Activated B cell treated with CpG ODN at 0.5 μM for 24 hours (primary cell): ENCODE measurements at regions of chr21 and their contacts with region 1.

Region 1: DNA sequence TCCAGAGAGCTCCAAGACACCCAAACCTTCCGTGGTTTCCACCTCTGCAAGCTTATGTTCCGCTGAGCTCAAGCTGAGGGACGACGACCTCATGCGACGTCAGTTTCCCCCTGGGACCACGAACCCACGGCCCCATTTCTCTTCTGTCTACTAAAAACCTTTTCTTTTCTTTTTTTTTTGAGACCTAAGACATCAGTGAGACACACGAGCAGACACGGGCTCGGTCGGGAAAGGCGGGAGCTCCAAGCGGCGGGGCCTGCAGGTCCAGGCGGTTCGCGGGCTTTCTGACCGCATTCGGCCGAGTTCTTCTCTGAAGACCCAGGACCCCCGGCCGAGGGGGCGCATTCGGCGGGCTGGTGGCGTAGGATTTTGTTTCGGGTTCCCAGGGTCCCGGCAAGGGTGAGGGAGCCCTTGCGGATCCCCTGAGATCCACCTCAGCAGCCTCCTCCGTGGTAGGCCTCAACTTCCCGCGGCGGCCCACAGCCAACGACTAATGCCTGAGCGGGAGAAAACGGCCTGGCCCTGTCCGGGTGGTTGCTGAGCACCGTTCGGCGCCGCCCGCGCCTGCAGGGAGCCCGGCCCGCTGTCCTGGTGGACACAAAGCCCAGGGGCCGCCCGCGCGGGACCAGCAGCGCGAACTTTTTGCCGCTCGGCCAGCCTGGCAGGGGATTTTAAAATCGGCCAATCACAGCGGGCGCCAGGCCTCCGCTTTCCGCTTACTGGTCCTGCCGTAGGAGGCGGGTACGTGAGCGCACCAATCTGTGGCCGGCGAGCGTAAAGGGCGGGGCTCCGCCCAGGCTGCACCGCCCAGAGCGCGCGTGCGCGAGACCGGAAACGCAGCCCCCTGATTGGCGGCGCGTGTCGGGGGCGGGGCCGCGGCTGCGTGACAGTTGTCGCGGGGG is at the start of gene C21orf58:
- DNase-seq: peak; percentile 98
- ATAC-seq: peak; percentile 82
- H3K4me3 Mint-ChIP-seq: peak within 1 kb of the TSS; percentile 94
- H3K27ac Mint-ChIP-seq: peak within 1 kb of the TSS; percentile 94
- H3K4me1 Mint-ChIP-seq: peaks cover 29% of the 10 kb centered on the region
- H3K27me3 Mint-ChIP-seq: no peaks in the 10 kb centered on the region
- CTCF ChIP-seq: no peak
- total RNA-seq, gene C21orf58: 4.7 TPM in 2 replicates

Region 2: GRCh38 chr21:45973659-45974072 is 349.8 kb before region 1 on chr21:
- CTCF ChIA-PET with region 1: no interaction called
- POLR2A ChIA-PET with region 1: no interaction called
- intact Hi-C with region 1: loop called (anchors 5 kb)
- DNase-seq: peak; percentile 54
- ATAC-seq: peak; percentile 87
- H3K4me3 Mint-ChIP-seq: peak overlapping the region; percentile 82
- H3K27ac Mint-ChIP-seq: no peak overlapping the region
- H3K4me1 Mint-ChIP-seq: peaks cover 6% of the 10 kb centered on the region
- H3K27me3 Mint-ChIP-seq: peaks cover 25% of the 10 kb centered on the region
- CTCF ChIP-seq: no peak

Region 3: GRCh38 chr21:46184625-46185555 is 138.6 kb before region 1 on chr21:
- CTCF ChIA-PET with region 1: no interaction called
- POLR2A ChIA-PET with region 1: no interaction called
- intact Hi-C with region 1: loop called (anchors 2 kb)
- DNase-seq: peak; percentile 69
- ATAC-seq: peak; percentile 82
- H3K4me3 Mint-ChIP-seq: peak overlapping the region; percentile 89
- H3K27ac Mint-ChIP-seq: peak overlapping the region; percentile 85
- H3K4me1 Mint-ChIP-seq: peaks cover 5% of the 10 kb centered on the region
- H3K27me3 Mint-ChIP-seq: no peaks in the 10 kb centered on the region
- CTCF ChIP-seq: no peak

Region 4: GRCh38 chr21:46285761-46286496 is 37.5 kb before region 1 on chr21 and contains the start of gene YBEY:
- CTCF ChIA-PET with region 1: no interaction called
- POLR2A ChIA-PET with region 1: interaction called, 3 read pairs
- intact Hi-C with region 1: loop called (anchors 1 kb)
- DNase-seq: peak; percentile 83
- ATAC-seq: peak; percentile 85
- H3K4me3 Mint-ChIP-seq: peak within 1 kb of the TSS; percentile 98
- H3K27ac Mint-ChIP-seq: peak within 1 kb of the TSS; percentile 98
- H3K4me1 Mint-ChIP-seq: peaks cover 49% of the 10 kb centered on the region
- H3K27me3 Mint-ChIP-seq: no peaks in the 10 kb centered on the region
- CTCF ChIP-seq: no peak
- total RNA-seq, gene YBEY: 11.8 and 13.7 TPM in 2 replicates

Region 5: DNA sequence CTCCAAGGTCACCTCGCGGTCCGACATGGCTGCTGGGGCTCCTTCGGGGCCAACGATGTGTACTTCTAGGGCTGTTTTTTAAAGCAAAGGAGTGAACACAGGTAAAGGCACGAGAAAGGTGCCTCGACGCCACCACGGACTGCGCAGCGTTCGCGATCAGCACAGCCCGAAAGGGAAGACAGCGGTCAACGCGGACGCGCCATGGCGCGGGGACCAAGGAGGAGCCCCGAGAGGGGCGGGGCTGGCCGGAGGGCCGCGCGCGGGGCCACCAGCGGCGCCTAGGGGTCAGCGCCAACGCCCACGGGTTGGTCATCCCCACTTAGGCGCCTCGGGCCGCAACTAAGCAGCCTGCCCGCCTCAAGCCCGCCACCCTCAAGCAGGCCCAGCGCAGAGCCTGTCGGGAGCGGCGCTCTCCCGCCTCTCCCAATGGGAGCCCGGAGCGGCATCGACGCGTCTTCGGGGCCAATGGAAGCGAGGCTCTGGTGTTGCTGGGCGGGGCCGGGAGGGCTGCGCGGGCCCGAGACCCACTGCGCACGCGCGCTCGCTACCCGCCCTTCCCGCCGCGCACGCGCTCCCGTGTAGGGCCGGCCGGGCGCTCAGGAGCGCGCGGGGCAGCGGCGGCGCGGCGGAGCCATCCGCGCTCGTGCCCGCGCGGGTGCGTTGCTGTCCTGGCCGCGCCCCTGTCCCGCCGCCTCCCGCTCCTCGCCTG is 135.0 kb after region 1 on chr21 and contains the start of gene DIP2A:
- CTCF ChIA-PET with region 1: no interaction called
- POLR2A ChIA-PET with region 1: no interaction called
- intact Hi-C with region 1: loop called (anchors 1 kb)
- DNase-seq: peak; percentile 95
- ATAC-seq: peak; percentile 98
- H3K4me3 Mint-ChIP-seq: peak within 1 kb of the TSS; percentile 88
- H3K27ac Mint-ChIP-seq: peak within 1 kb of the TSS; percentile 88
- H3K4me1 Mint-ChIP-seq: peaks cover 25% of the 10 kb centered on the region
- H3K27me3 Mint-ChIP-seq: no peaks in the 10 kb centered on the region
- CTCF ChIP-seq: no peak
- total RNA-seq, gene DIP2A: 28.2 and 32.1 TPM in 2 replicates